ENCODE measurements at regions of chr12 and their contacts with region 1.

Region 1: GRCh38 chr12:126582231-126582630 is 1517.0 kb downstream of the AACS start:
- DNase-seq: no peak
- H3K4me3 ChIP-seq: no peak overlapping the region
- H3K27ac ChIP-seq: no peak overlapping the region
- H3K4me1 ChIP-seq: no peaks in the 10 kb centered on the region
- H3K27me3 ChIP-seq: no peaks in the 10 kb centered on the region
- CTCF ChIP-seq: no peak
- POLR2A ChIP-seq: no peak

Region 2: DNA sequence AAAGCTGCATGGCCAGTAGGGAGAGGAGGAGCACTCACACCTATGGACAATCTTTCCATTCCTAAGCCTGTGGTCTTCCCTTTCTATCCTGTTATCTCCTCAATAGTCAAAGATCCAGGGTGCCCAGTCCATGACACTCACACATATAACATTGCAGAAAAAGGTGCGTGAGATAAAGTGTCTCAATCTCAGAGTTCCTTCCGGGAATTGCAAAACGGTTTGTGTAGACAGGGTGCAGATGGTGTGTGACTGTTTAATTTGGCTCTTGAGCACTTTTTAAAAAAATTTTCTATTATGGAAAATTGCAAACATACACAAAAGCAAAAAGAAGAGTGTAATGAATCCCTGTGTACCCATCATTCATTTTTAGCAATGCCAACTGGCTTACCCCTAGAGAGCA is 23.4 kb before region 1 on chr12:
- intact Hi-C with region 1: loop called (anchors 1 kb)
- DNase-seq: no peak
- H3K4me3 ChIP-seq: no peak overlapping the region
- H3K27ac ChIP-seq: no peak overlapping the region
- H3K4me1 ChIP-seq: no peaks in the 10 kb centered on the region
- H3K27me3 ChIP-seq: no peaks in the 10 kb centered on the region
- CTCF ChIP-seq: no peak
- POLR2A ChIP-seq: no peak